ENCODE measurements at regions of chr3 and their contacts with region 1.

Region 1: DNA sequence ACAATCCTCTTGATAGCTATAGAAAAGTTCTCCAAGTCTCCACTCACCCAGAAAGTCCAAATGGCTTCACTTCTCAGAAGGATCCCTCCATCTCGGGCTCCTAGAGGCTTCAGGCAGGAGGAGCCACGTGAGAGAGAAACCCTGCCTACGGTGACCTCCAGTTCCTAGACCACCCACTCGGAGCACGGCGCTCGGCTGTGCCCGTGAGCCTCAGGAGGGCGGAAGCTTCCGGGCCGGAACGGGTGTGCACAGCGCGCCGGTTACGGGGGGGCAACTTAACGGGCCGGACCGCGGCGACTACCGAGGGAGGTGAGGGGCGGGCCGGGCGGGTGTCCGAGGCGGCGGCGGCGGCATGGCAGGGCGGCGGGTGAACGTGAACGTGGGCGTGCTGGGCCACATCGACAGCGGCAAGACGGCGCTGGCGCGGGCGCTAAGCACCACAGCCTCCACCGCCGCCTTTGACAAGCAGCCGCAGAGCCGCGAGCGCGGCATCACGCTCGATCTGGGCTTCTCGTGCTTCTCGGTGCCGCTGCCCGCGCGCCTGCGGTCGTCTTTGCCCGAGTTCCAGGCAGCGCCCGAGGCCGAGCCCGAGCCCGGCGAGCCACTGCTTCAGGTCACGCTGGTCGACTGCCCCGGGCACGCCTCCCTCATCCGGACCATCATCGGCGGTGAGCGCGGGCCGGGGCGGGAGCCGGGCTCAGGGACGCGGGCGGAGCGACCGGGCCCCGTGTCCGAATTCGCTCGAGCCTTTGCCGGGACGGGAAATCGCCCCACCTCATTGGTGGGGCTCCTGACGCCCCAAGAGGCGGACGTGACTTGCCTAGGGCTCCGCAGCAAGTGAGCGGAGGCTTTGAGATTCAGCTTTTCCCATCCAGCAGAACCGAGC is at the start of gene EEFSEC:
- DNase-seq: peak; percentile 61 to 88
- H3K4me3 ChIP-seq: peak within 1 kb of the TSS; percentile 96
- H3K27ac ChIP-seq: peak within 1 kb of the TSS; percentile 70
- H3K4me1 ChIP-seq: peaks cover 9% of the 10 kb centered on the region
- H3K27me3 ChIP-seq: no peaks in the 10 kb centered on the region
- CTCF ChIP-seq: no peak
- total RNA-seq, gene EEFSEC: 21.0 and 21.3 TPM in 2 replicates

Region 2: DNA sequence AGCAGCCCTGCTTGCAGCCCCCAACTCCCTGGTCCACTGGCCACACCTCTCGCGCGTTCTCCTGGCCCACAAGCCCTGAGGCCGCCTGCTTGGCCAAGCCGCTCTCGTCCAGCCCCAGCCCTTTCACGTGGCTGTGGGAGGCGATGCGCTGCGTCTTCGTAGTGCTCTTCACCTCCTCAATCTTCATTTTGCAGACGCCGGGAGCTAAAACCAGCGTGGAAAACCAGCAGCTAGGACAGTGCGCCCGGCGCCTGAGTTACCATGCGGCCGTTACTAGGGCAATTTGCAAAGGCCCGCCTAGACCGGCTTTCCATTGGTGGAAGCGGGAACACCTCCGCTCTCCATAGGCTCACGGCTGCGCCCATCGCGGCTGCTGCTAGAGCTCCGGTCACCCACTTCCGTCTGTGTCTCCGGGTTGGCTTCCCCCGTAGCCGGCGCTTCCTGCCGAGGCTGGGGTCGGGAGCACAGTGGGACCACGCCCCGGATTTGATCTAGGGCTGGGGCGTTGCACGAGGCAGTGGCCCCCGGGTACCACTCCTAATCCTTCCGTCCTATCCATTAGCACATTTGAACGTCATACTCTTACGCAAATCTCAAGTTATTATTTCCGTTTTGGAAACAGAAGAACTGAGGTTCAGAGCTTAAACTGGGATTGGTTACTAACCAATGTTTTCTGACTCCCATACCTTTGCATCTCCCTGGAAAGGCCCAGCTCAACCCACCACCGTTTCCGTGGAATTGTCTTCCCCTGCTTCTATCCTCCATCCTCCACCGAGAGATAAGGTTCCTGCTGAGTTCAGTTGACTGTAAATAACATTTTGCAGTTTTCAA is 29.6 kb before region 1 on chr3 and contains the start of gene RUVBL1:
- CTCF ChIA-PET with region 1: no interaction called
- POLR2A ChIA-PET with region 1: interaction called, 8 read pairs
- intact Hi-C with region 1: loop called (anchors 1 kb)
- DNase-seq: peak; percentile 93 to 98
- H3K4me3 ChIP-seq: peak within 1 kb of the TSS; percentile 92
- H3K27ac ChIP-seq: peak within 1 kb of the TSS; percentile 53
- H3K4me1 ChIP-seq: peaks cover 17% of the 10 kb centered on the region
- H3K27me3 ChIP-seq: no peaks in the 10 kb centered on the region
- CTCF ChIP-seq: no peak
- total RNA-seq, gene RUVBL1: 91.4 and 115 TPM in 2 replicates

Region 3: GRCh38 chr3:129449279-129450115 is 1296.1 kb after region 1 on chr3:
- CTCF ChIA-PET with region 1: no interaction called
- POLR2A ChIA-PET with region 1: no interaction called
- intact Hi-C with region 1: no loop called
- DNase-seq: no peak
- H3K4me3 ChIP-seq: no peak overlapping the region
- H3K27ac ChIP-seq: no peak overlapping the region
- H3K4me1 ChIP-seq: no peaks in the 10 kb centered on the region
- H3K27me3 ChIP-seq: no peaks in the 10 kb centered on the region
- CTCF ChIP-seq: no peak